CD4-positive, alpha-beta memory T cell (primary cell): ENCODE measurements at regions of chr12 and their contacts with region 1.

Region 1: GRCh38 chr12:53379389-53380103 is 430 bp upstream of the SP1 start:
- DNase-seq: peak; percentile 99 to 100 (median 100)
- H3K4me3 ChIP-seq: peak overlapping the region; percentile 57 to 86
- H3K4me3 Mint-ChIP-seq: no peak overlapping the region
- H3K27ac ChIP-seq: peak overlapping the region; percentile 70
- H3K27ac Mint-ChIP-seq: no peak overlapping the region
- H3K4me1 ChIP-seq: peaks cover 46% of the 10 kb centered on the region
- H3K4me1 Mint-ChIP-seq: peaks cover 28 to 37% (median 34%) of the 10 kb centered on the region in 4 donors
- H3K27me3 ChIP-seq: no peaks in the 10 kb centered on the region
- H3K27me3 Mint-ChIP-seq: no peaks in the 10 kb centered on the region

Region 2: GRCh38 chr12:52748578-52748977 is 631.0 kb before region 1 on chr12:
- CTCF ChIA-PET with region 1: no interaction called
- POLR2A ChIA-PET with region 1: no interaction called
- intact Hi-C with region 1: no loop called
- DNase-seq: no peak
- H3K4me3 ChIP-seq: no peak overlapping the region
- H3K4me3 Mint-ChIP-seq: no peak overlapping the region
- H3K27ac ChIP-seq: no peak overlapping the region
- H3K27ac Mint-ChIP-seq: no peak overlapping the region
- H3K4me1 ChIP-seq: no peaks in the 10 kb centered on the region
- H3K4me1 Mint-ChIP-seq: peaks cover 3 to 7% (median 5%) of the 10 kb centered on the region in 4 donors
- H3K27me3 ChIP-seq: no peaks in the 10 kb centered on the region
- H3K27me3 Mint-ChIP-seq: peaks cover 4 to 12% of the 10 kb centered on the region in 2 donors

Region 3: DNA sequence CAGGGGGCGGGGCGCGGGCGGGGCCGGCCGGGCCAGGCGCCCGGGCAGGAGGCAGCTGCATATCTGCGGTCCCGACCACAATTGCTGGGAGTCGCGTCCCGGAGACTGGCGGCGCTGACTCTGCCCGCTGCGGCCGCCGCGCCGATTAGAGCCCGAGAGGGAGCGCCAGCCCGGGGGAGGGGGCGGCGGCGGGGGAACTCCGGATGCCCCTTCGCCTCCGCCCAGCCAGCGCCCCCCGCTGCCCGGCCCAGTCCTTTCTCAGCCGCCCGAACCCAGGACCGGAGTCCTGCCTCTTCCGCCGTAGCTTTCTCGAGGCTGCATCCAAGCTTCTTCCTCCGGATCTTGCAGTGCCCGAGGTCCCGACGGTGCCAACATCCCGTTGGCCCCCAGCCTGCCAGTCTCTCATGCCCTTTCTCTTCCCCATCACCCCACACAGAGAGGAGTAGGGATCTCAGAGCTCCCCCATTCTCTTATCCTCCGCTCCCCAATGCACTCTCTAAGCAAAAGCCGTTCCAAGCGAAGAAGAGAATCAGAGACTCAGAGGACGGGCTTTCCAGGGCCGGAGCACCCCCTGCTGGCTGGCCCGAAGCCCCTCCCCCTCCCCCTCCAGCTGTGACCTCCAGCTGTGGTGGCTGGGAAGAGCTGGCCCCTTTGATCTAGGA is 34.6 kb before region 1 on chr12:
- CTCF ChIA-PET with region 1: interaction called, 22 read pairs
- POLR2A ChIA-PET with region 1: interaction called, 14 read pairs
- intact Hi-C with region 1: no loop called
- DNase-seq: peak; percentile 62 to 66 (median 65)
- H3K4me3 ChIP-seq: peak overlapping the region in 1 of 2 donors; percentile 73
- H3K4me3 Mint-ChIP-seq: peak overlapping the region; percentile 94 to 99 (median 98)
- H3K27ac ChIP-seq: peak overlapping the region; percentile 44
- H3K27ac Mint-ChIP-seq: peak overlapping the region; percentile 68 to 97 (median 94)
- H3K4me1 ChIP-seq: peaks cover 7% of the 10 kb centered on the region
- H3K4me1 Mint-ChIP-seq: peaks cover 11 to 18% (median 14%) of the 10 kb centered on the region in 4 donors
- H3K27me3 ChIP-seq: no peaks in the 10 kb centered on the region
- H3K27me3 Mint-ChIP-seq: no peaks in the 10 kb centered on the region

Region 4: DNA sequence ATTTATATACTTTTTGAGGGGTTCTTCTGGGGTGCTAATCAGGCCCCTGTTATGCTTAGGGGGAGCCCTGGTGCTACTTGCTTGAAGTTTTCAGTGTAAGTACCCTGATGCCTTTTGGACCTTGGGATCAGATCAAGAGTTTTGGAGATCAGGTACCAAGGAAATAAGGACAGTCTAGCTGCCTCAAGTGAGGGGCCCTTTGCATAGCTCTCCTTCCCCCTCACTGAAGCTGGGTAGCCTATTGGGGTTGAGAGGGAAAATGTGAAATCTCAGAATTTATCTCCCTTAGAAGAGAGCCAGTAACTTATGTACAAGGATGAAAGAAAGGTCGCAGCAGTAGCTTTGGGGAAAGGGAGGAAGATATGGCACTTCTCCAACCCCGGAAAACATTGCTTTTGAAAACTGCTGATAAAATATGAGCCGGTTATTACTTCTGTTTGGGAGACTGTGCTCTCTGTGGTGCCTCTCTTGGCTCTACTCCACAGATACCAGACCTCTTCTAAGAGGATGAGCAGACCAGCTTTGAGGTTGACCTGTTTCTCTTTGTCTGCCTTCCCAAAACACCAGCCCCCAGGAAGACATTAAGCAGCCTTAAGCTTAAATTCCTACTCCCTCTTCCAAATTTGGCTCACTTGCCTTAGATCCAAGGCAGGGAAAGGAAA is 35.3 kb after region 1 on chr12:
- CTCF ChIA-PET with region 1: interaction called, 23 read pairs
- POLR2A ChIA-PET with region 1: interaction called, 7 read pairs
- intact Hi-C with region 1: no loop called
- DNase-seq: no peak
- H3K4me3 ChIP-seq: no peak overlapping the region
- H3K4me3 Mint-ChIP-seq: no peak overlapping the region
- H3K27ac ChIP-seq: no peak overlapping the region
- H3K27ac Mint-ChIP-seq: peak overlapping the region; percentile 13 to 86 (median 48)
- H3K4me1 ChIP-seq: peaks cover 29% of the 10 kb centered on the region
- H3K4me1 Mint-ChIP-seq: peaks cover 26 to 43% (median 32%) of the 10 kb centered on the region in 4 donors
- H3K27me3 ChIP-seq: no peaks in the 10 kb centered on the region
- H3K27me3 Mint-ChIP-seq: no peaks in the 10 kb centered on the region

Region 5: GRCh38 chr12:53424626-53425514 is 45.3 kb after region 1 on chr12:
- CTCF ChIA-PET with region 1: interaction called, 23 read pairs
- POLR2A ChIA-PET with region 1: interaction called, 17 read pairs
- intact Hi-C with region 1: loop called (anchors 1 kb)
- DNase-seq: no peak
- H3K4me3 ChIP-seq: no peak overlapping the region
- H3K4me3 Mint-ChIP-seq: no peak overlapping the region
- H3K27ac ChIP-seq: no peak overlapping the region
- H3K27ac Mint-ChIP-seq: no peak overlapping the region
- H3K4me1 ChIP-seq: peaks cover 5% of the 10 kb centered on the region
- H3K4me1 Mint-ChIP-seq: peaks cover 5 to 9% (median 6%) of the 10 kb centered on the region in 4 donors
- H3K27me3 ChIP-seq: no peaks in the 10 kb centered on the region
- H3K27me3 Mint-ChIP-seq: no peaks in the 10 kb centered on the region

Region 6: DNA sequence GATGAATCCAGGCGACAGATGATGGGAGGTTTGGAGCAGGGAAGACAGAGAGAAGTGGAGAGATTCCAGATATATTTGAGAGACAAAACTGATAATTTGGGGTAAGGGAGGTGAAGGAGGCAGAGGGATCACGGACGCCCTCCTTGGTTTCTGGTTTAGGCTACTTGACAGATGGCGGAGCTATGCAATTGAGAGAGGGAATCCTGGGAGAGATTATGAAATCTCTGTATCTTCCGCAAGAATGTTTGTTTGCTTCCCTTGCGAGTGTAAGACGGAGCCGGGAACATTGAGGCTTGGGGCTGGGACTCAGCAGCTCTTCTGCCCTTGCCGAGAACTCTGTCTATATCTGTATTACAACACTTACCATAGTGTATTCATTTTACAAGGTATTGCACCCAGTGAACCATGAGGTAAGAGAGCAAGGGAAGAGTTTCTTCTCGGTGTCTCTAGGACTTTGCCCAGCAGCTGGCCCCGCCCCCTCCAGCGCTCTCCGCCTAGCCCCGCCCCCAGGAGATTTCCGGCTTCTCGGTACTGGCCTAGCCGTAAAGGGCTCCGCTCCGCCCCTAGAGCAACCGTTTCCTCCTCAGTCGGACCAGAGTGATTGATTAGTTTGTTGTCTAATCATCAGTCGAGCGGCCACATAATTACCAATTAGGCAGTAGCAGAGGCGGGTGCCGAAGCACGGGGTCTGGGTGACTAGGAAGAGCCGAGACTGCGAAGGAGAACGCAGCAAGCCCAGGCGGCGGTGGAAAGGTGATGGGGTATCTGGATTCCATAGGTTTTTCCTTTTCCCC is 61.7 kb after region 1 on chr12 and contains the start of gene PRR13:
- CTCF ChIA-PET with region 1: no interaction called
- POLR2A ChIA-PET with region 1: interaction called, 13 read pairs
- intact Hi-C with region 1: loop called (anchors 1 kb)
- DNase-seq: peak; percentile 95 to 100 (median 97)
- H3K4me3 ChIP-seq: peak within 1 kb of the TSS; percentile 75 to 91
- H3K4me3 Mint-ChIP-seq: peak within 1 kb of the TSS; percentile 95 to 99 (median 97)
- H3K27ac ChIP-seq: peak within 1 kb of the TSS; percentile 98
- H3K27ac Mint-ChIP-seq: peak within 1 kb of the TSS; percentile 91 to 99 (median 96)
- H3K4me1 ChIP-seq: peaks cover 40% of the 10 kb centered on the region
- H3K4me1 Mint-ChIP-seq: peaks cover 22 to 59% (median 40%) of the 10 kb centered on the region in 4 donors
- H3K27me3 ChIP-seq: no peaks in the 10 kb centered on the region
- H3K27me3 Mint-ChIP-seq: no peaks in the 10 kb centered on the region
- total RNA-seq, gene PRR13: 242 to 247 TPM

Region 7: DNA sequence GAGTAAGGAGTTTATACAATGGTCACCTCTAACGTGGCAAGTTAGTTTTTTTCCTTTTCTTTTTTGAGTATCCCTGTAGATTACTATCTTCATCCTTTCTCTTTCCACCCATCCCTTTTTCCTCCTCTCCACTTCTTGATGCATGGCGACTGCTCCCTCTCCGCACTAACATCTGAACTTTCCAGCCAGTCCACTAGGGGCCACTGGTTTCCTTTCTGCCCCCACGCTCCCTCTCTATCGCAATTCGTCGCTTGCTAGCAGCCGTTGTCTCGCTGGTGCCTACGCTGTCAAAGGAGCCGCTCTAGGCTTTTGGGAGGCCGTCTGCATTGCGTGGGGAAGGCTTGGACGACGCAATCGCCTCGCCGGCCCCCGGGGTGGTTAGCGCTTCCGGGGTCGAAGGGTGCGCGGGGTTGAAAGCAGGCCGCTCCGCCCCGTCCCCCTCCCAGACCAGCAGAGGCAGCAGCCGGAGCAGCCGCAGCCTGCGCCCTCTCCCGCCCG is 72.2 kb after region 1 on chr12 and contains the start of gene PCBP2:
- CTCF ChIA-PET with region 1: no interaction called
- POLR2A ChIA-PET with region 1: interaction called, 7 read pairs
- intact Hi-C with region 1: loop called (anchors 1 kb)
- DNase-seq: peak; percentile 97 to 99 (median 98)
- H3K4me3 ChIP-seq: peak within 1 kb of the TSS; percentile 58 to 61
- H3K4me3 Mint-ChIP-seq: peak within 1 kb of the TSS; percentile 95 to 100 (median 98)
- H3K27ac ChIP-seq: peak within 1 kb of the TSS; percentile 95
- H3K27ac Mint-ChIP-seq: peak within 1 kb of the TSS; percentile 98 to 100 (median 99)
- H3K4me1 ChIP-seq: peaks cover 34% of the 10 kb centered on the region
- H3K4me1 Mint-ChIP-seq: peaks cover 20 to 49% (median 31%) of the 10 kb centered on the region in 4 donors
- H3K27me3 ChIP-seq: no peaks in the 10 kb centered on the region
- H3K27me3 Mint-ChIP-seq: no peaks in the 10 kb centered on the region
- total RNA-seq, gene PCBP2: 848 to 858 TPM